HepG2 (cell line): ENCODE measurements at regions of chr11 and their contacts with region 1.

Region 1: GRCh38 chr11:47858169-47858543 is 10.0 kb upstream of the NUP160 start:
- DNase-seq: no peak
- ATAC-seq: no peak
- H3K4me3 ChIP-seq: no peak overlapping the region
- H3K27ac ChIP-seq: no peak overlapping the region
- H3K4me1 ChIP-seq: peaks cover 8% of the 10 kb centered on the region
- H3K27me3 ChIP-seq: no peaks in the 10 kb centered on the region
- CTCF ChIP-seq: no peak
- EP300 ChIP-seq: no peak
- POLR2A ChIP-seq: no peak
- RAD21 ChIP-seq: no peak

Region 2: GRCh38 chr11:47454180-47454644 is 403.9 kb before region 1 on chr11:
- CTCF ChIA-PET with region 1: no interaction called
- POLR2A ChIA-PET with region 1: no interaction called
- in situ Hi-C with region 1: no loop called
- intact Hi-C with region 1: loop called (anchors 10 kb)
- DNase-seq: peak; percentile 85
- ATAC-seq: peak; percentile 87
- H3K4me3 ChIP-seq: no peak overlapping the region
- H3K27ac ChIP-seq: no peak overlapping the region
- H3K4me1 ChIP-seq: peaks cover 5% of the 10 kb centered on the region
- H3K27me3 ChIP-seq: no peaks in the 10 kb centered on the region
- CTCF ChIP-seq: peak; percentile 92
- EP300 ChIP-seq: no peak
- POLR2A ChIP-seq: no peak
- RAD21 ChIP-seq: peak; percentile 79

Region 3: DNA sequence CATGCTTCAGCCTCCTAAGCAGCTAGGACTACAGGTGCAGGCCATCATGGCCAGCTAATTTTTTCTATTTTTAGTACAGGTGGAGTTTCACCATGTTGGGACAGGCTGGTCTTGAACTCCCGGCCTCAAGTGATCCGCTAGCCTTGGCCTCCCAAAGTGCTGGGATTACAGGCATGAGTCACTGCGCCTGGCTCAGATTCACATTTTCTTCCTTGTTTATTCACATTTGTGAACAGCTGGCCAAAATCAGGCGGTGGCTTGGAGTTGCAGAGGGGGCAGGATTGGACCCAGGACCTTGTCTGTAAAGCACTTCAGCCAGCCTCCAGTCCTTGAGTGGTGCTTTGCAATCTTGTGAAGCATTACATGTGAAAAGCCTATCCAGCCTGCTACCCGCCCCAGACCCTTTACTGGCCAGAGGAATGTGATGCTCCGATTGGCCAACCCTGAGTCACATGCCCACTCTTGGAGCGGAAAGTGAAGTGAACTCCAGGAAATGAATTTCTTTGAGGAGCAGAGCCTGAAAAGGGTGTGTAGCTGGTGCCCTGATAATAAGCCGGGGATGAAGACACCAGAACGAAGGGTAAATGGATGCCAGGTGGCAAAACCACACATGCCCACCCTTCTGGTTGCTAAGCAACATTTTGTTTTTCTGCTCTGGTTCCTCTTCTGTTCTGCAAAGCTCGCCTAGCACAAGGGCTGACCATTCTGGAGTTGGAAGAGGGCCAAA is 59.6 kb after region 1 on chr11:
- CTCF ChIA-PET with region 1: no interaction called
- POLR2A ChIA-PET with region 1: no interaction called
- in situ Hi-C with region 1: no loop called
- intact Hi-C with region 1: no loop called
- DNase-seq: peak; percentile 20
- ATAC-seq: peak; percentile 61
- H3K4me3 ChIP-seq: no peak overlapping the region
- H3K27ac ChIP-seq: no peak overlapping the region
- H3K4me1 ChIP-seq: peaks cover 47% of the 10 kb centered on the region
- H3K27me3 ChIP-seq: peaks cover 0 to 3% of the 10 kb centered on the region in 2 experiments; a peak in 1 of 5 replicates
- CTCF ChIP-seq: no peak
- EP300 ChIP-seq: no peak
- POLR2A ChIP-seq: no peak
- RAD21 ChIP-seq: no peak